ENCODE measurements at regions of chr9 and their contacts with region 1.

Region 1: DNA sequence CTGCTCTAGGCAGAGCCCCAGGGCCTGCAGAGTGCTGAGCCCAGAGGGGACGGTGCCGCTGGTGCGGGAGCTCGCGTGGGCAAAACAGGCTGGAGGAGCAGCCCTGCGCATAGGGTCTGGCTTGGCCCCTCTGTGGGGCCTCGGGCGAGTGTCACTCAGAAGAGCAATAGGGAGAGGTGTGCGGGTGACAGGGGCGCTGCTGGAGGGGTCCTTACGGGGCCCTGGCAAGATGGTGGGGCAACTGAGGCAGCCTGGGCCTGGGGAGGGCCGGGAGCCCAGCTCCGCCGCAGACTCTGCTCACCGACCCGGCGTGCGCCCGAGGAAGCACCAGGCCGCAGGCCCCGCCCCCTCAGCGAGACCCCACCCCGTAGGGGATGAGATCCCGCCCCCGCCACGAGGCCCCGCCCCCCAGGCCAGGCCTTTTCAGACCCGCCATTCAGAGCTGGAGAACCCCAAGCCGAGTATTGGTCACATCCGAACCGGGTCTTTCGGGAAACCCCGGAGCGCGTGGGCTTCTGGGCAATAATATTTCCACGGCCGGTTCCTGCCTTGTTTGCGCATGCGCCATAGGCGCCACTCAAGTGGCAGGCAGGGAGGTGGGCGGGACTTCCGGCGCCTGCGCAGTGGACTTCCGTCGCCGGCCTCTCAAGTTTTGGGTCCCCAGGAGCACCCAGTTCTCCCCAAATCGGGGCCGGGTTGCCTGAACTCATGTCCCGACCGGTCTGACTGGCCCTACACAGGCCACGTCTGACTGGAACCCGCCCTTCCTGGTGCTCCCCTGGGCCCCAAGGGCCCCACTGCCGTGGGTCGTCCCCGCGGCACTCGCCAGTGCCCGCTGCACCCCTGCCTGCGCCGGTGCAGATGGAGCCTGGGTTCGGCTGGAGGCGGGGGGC is 1.3 kb upstream of the RNF208 start:
- DNase-seq: peak; percentile 96
- H3K4me3 ChIP-seq: peak overlapping the region; percentile 80
- H3K27ac ChIP-seq: peak overlapping the region; percentile 65
- H3K27me3 ChIP-seq: no peaks in the 10 kb centered on the region
- CTCF ChIP-seq: no peak

Region 2: DNA sequence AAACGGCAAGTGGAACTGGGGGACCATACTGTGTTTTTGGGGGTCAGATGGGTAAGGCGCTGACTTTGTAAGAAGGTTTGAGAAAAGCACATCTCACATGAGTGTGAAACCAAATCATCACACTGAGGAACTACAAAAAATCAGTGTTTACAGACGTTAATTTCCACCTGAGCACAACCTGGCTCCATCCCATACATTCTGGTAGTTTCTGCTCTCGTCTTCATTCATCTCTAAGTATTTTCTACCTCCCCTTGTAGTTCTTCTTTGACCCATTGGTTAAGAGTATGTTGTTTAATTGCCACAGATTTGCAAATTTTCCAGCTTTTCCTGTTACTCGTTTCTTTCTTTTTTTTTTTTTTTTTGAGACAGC is 99.9 kb before region 1 on chr9:
- CTCF ChIA-PET with region 1: interaction called, 5 read pairs
- POLR2A ChIA-PET with region 1: interaction called, 19 read pairs
- DNase-seq: no peak
- H3K4me3 ChIP-seq: no peak overlapping the region
- H3K27ac ChIP-seq: no peak overlapping the region
- H3K27me3 ChIP-seq: no peaks in the 10 kb centered on the region
- CTCF ChIP-seq: no peak

Region 3: DNA sequence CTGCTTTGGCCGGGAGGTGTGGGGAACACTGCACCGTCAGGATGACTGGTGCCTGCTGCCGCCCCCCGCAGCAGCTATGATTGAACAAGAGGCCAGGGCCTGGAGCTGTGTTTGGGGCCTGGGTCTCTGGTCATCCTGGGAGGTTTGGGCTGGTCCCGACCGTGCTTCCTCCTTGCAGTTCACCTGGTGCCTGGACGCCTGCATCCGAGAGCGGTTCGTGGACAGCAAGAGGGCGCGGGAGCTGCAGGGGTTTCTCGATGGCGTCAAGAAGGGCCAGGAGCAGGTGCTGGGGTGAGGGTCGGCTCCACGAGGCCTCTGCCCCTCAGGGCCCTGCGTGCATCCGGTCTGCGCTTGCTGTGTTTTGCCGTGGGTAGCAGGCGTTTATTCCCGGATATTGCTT is 40.7 kb after region 1 on chr9:
- CTCF ChIA-PET with region 1: interaction called, 12 read pairs
- POLR2A ChIA-PET with region 1: no interaction called
- DNase-seq: no peak
- H3K4me3 ChIP-seq: no peak overlapping the region
- H3K27ac ChIP-seq: no peak overlapping the region
- H3K27me3 ChIP-seq: no peaks in the 10 kb centered on the region
- CTCF ChIP-seq: no peak

Region 4: DNA sequence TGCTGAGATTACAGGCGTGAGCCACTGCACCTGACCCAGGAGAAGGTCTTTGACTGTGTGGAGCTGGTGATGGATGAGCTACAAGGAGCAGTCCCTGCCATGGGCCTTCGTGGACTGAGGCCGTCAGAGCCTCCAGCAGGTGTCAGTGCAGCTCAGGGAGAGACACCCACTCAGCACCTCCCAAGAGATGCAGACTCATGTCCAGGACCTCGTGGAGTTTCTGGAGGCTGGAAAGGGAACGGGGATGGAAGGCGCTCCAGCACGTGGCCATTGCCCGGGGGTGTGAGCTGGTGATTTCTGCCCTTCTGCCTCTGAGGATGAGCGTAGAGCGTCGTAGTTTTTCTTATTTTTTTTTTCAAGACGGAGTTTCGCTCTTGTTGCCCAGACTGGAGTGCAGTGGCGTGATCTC is 63.7 kb after region 1 on chr9:
- CTCF ChIA-PET with region 1: no interaction called
- POLR2A ChIA-PET with region 1: no interaction called
- DNase-seq: no peak
- H3K4me3 ChIP-seq: no peak overlapping the region
- H3K27ac ChIP-seq: no peak overlapping the region
- H3K27me3 ChIP-seq: no peaks in the 10 kb centered on the region
- CTCF ChIP-seq: peak; percentile 60

Measured in AG04450 (cell line).